Esophagus muscularis mucosa (tissue), 4 donors: ENCODE measurements at regions of chr3 and their contacts with region 1.

Region 1: GRCh38 chr3:7436542-7436941 is 575.6 kb downstream of the GRM7 start:
- DNase-seq: no peak
- H3K4me3 ChIP-seq: no peak overlapping the region
- H3K27ac ChIP-seq: no peak overlapping the region
- H3K4me1 ChIP-seq: no peaks in the 10 kb centered on the region
- H3K27me3 ChIP-seq: no peaks in the 10 kb centered on the region
- CTCF ChIP-seq: no peak
- EP300 ChIP-seq: no peak
- POLR2A ChIP-seq: no peak

Region 2: GRCh38 chr3:7086417-7086816 is 350.1 kb before region 1 on chr3:
- intact Hi-C with region 1: loop called (anchors 10 kb)
- DNase-seq: no peak
- H3K4me3 ChIP-seq: no peak overlapping the region
- H3K27ac ChIP-seq: no peak overlapping the region
- H3K4me1 ChIP-seq: no peaks in the 10 kb centered on the region
- H3K27me3 ChIP-seq: no peaks in the 10 kb centered on the region
- CTCF ChIP-seq: no peak
- EP300 ChIP-seq: no peak
- POLR2A ChIP-seq: no peak